ENCODE measurements at regions of chr1 and their contacts with region 1.

Region 1: DNA sequence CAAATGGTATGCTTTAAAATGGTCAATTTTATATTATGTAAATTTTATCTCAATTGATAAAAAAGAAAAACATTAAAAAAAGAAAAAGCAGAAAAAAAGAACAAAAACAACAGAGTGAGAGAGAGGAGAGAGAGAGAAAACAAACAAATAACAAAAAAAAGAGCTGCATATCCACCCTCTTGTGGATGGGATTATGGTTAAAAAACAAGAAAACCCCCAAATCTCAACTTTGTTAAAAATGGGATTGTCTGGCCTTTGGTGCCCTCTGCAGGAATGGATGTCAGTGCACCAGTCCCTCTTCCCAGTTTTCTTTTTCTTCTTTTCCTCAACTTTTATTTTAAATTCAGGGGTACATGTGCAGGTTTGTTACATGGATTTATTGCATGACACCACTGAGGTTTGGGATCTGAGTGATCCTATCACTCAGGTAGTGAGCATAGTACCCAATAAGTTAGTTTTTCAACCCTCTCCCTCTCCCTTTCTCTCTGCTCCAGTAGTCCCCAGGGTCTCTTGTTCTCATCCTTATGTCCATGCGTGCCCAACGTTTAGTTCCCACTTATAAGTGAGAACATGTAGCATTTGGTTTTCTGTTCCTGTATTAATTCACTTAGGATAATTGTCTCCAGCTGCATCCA is 28.1 kb downstream of the RNF187 start:
- DNase-seq: peak in 7 of 9 donors; percentile 14 to 57 (median 43)
- ATAC-seq: peak; percentile 67
- H3K4me3 ChIP-seq: no peak overlapping the region
- H3K4me3 Mint-ChIP-seq: no peak overlapping the region
- H3K27ac ChIP-seq: no peak overlapping the region
- H3K27ac Mint-ChIP-seq: no peak overlapping the region
- H3K4me1 ChIP-seq: peaks cover 0 to 6% of the 10 kb centered on the region in 2 donors
- H3K4me1 Mint-ChIP-seq: peaks cover 0 to 8% (median 6%) of the 10 kb centered on the region in 7 donors
- H3K27me3 ChIP-seq: no peaks in the 10 kb centered on the region
- H3K27me3 Mint-ChIP-seq: peaks cover 19 to 56% (median 42%) of the 10 kb centered on the region in 5 donors

Region 2: GRCh38 chr1:227563324-227564201 is 951.8 kb before region 1 on chr1 and contains the start of gene ZNF678:
- CTCF ChIA-PET with region 1: no interaction called
- POLR2A ChIA-PET with region 1: no interaction called
- intact Hi-C with region 1: no loop called
- DNase-seq: peak; percentile 58 to 86 (median 84)
- ATAC-seq: peak; percentile 95
- H3K4me3 ChIP-seq: peak within 1 kb of the TSS; percentile 88
- H3K4me3 Mint-ChIP-seq: peak within 1 kb of the TSS; percentile 87 to 97 (median 94)
- H3K27ac ChIP-seq: peak within 1 kb of the TSS; percentile 82
- H3K27ac Mint-ChIP-seq: peak within 1 kb of the TSS; percentile 71 to 95 (median 91)
- H3K4me1 ChIP-seq: peaks cover 4 to 5% of the 10 kb centered on the region in 2 donors
- H3K4me1 Mint-ChIP-seq: peaks cover 17 to 57% (median 40%) of the 10 kb centered on the region in 7 donors
- H3K27me3 ChIP-seq: no peaks in the 10 kb centered on the region
- H3K27me3 Mint-ChIP-seq: peaks cover 22 to 27% (median 27%) of the 10 kb centered on the region in 5 donors
- total RNA-seq, gene ZNF678: 3.2 to 8.3 (median 7.4) TPM

Region 3: DNA sequence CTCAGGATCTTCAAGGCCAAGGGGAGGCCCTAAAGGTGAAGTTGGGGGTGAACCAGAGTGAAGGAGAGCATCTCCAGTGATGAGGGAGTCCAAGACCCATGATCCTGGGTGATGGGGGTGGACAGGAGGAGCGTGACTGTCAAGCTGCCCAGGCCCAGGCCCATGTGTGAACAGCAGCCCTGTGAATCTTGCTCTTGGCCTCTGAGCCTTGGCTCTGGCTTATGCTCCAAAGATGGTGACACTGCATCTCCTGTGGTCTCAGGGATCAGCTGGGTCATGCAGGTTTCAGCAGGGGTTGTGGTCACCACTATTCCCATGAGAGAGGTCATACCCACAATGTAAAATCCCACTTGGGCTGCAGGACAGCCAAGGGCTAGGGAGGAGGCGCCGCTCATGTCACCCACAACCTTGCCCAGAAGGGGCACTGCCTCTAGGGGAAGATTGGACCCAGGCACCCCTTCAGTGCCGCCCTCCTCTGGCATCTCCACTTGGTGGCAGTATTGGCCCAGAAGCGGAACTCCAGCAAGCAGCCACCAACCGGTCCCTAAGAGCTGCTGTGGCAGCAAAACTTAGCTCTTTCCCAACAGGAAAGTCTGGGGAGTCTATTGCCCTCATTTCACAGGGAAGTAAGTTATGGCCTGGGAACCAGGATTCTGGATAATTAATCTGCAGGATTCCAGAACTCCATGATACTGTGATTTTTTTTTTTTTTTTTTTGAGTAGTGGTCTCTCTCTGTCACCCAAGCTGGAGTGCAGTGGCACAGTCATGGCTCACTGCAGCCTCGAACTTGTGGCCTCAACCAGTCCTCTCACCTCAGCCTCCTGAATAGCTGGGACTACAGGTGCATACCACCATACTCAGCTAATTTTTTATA is 516.0 kb before region 1 on chr1:
- CTCF ChIA-PET with region 1: interaction called, 3 read pairs
- POLR2A ChIA-PET with region 1: no interaction called
- intact Hi-C with region 1: loop called (anchors 1 kb)
- DNase-seq: peak; percentile 42 to 74 (median 60)
- ATAC-seq: peak; percentile 93
- H3K4me3 ChIP-seq: no peak overlapping the region
- H3K4me3 Mint-ChIP-seq: no peak overlapping the region
- H3K27ac ChIP-seq: no peak overlapping the region
- H3K27ac Mint-ChIP-seq: no peak overlapping the region
- H3K4me1 ChIP-seq: no peaks in the 10 kb centered on the region
- H3K4me1 Mint-ChIP-seq: no peaks in the 10 kb centered on the region
- H3K27me3 ChIP-seq: peaks cover under 1 to 5% of the 10 kb centered on the region in 2 donors
- H3K27me3 Mint-ChIP-seq: peaks cover 9 to 44% (median 25%) of the 10 kb centered on the region in 5 donors

Region 4: GRCh38 chr1:228131766-228132165 is 383.6 kb before region 1 on chr1:
- CTCF ChIA-PET with region 1: interaction called, 3 read pairs
- POLR2A ChIA-PET with region 1: no interaction called
- intact Hi-C with region 1: loop called (anchors 1 kb)
- DNase-seq: peak in 1 of 9 donors; percentile 6
- ATAC-seq: no peak
- H3K4me3 ChIP-seq: no peak overlapping the region
- H3K4me3 Mint-ChIP-seq: no peak overlapping the region
- H3K27ac ChIP-seq: no peak overlapping the region
- H3K27ac Mint-ChIP-seq: no peak overlapping the region
- H3K4me1 ChIP-seq: peaks cover 0 to 11% of the 10 kb centered on the region in 2 donors
- H3K4me1 Mint-ChIP-seq: peaks cover 0 to 11% (median 7%) of the 10 kb centered on the region in 7 donors
- H3K27me3 ChIP-seq: no peaks in the 10 kb centered on the region
- H3K27me3 Mint-ChIP-seq: peaks cover 0 to 53% (median 9%) of the 10 kb centered on the region in 5 donors

Region 5: GRCh38 chr1:228378090-228378872 is 137.0 kb before region 1 on chr1:
- CTCF ChIA-PET with region 1: no interaction called
- POLR2A ChIA-PET with region 1: no interaction called
- intact Hi-C with region 1: loop called (anchors 1 to 2 kb)
- DNase-seq: peak; percentile 37 to 75 (median 61)
- ATAC-seq: peak; percentile 58
- H3K4me3 ChIP-seq: peak overlapping the region; percentile 37
- H3K4me3 Mint-ChIP-seq: peak overlapping the region; percentile 80 to 90 (median 84)
- H3K27ac ChIP-seq: no peak overlapping the region
- H3K27ac Mint-ChIP-seq: peak overlapping the region in 4 of 9 donors; percentile 28 to 72 (median 51)
- H3K4me1 ChIP-seq: no peaks in the 10 kb centered on the region
- H3K4me1 Mint-ChIP-seq: peaks cover 6 to 18% (median 8%) of the 10 kb centered on the region in 7 donors
- H3K27me3 ChIP-seq: peaks cover 0 to 4% of the 10 kb centered on the region in 2 donors
- H3K27me3 Mint-ChIP-seq: peaks cover 0 to 42% (median 9%) of the 10 kb centered on the region in 5 donors

Region 6: DNA sequence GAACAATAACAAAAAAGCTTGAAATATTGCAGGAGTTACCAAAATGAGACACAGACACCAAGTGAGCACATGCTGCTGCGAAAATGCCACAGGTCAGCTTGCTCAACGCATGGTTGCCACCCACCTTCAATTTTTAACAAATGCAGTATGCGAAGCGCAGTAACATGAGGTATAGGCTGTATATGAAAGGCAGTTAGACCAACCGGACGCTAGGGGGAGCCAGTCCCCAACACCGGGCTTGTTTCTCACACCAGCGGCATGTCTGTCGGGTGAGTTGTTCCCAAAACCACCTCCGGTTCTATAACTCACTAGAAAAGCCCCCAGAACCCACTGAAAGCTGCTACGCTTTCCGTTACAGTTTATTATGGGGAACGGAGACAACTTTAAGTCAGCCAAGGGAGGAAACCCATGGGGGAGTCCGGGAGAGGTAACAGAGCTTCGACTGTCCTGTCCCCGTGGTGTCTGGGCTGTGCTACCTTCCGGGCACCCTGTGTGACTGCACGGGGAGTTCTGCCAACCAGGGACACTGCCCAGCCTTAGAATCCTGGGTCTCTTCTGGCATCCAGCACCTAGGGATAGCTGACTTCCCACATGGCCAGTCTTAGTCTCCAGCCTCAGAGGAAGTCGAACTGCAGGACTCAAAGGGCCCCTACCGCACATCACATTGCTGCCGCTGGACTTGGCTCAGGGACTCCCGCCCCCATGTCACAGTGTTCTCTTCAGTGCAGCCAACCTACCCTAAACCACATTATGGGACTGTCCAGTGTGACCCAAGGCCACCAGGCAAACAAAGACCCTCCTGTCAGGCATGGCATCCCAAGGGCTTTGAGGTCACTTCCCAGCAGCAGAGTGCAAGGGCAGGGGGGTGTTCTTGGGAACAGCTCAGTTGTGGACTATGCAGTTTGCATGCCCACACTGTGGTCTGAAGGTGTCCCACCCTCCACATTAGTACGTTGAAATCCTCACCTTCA is 14.1 kb before region 1 on chr1:
- CTCF ChIA-PET with region 1: interaction called, 5 read pairs
- POLR2A ChIA-PET with region 1: interaction called, 3 read pairs
- intact Hi-C with region 1: loop called (anchors 1 kb)
- DNase-seq: peak; percentile 72 to 89 (median 85)
- ATAC-seq: peak; percentile 99
- H3K4me3 ChIP-seq: peak overlapping the region; percentile 44
- H3K4me3 Mint-ChIP-seq: peak overlapping the region; percentile 71 to 86 (median 80)
- H3K27ac ChIP-seq: no peak overlapping the region
- H3K27ac Mint-ChIP-seq: peak overlapping the region in 5 of 9 donors; percentile 19 to 72 (median 66)
- H3K4me1 ChIP-seq: peaks cover 9 to 14% of the 10 kb centered on the region in 2 donors
- H3K4me1 Mint-ChIP-seq: peaks cover 9 to 31% (median 18%) of the 10 kb centered on the region in 7 donors
- H3K27me3 ChIP-seq: no peaks in the 10 kb centered on the region
- H3K27me3 Mint-ChIP-seq: peaks cover 0 to 8% (median 0%) of the 10 kb centered on the region in 5 donors

Measured in naive thymus-derived CD4-positive, alpha-beta T cell (primary cell).